WTC11 (cell line): ENCODE measurements at regions of chr11 and their contacts with region 1.

Region 1: DNA sequence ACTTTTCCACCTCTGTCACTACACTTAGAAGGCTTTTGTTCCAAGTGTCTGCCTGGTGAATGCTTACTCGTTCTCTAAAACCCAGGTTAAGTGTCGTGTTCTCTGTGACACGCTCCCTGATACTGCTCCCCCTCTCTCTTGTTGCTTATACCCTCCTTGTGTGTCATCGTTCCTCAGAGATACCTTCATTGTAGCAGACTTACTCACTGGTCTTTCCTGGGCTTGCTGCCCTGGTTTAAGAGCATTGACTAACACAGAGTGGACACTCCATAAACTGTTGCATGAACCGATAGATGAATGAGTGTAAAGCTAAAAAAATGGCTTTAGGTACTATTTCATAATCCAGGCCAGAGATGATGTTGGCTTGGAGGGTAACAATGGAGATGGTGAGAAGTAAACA is 171.3 kb downstream of the GRIK4 start:
- DNase-seq: no peak
- ATAC-seq: no peak
- H3K4me3 Mint-ChIP-seq: no peak overlapping the region
- H3K27ac Mint-ChIP-seq: no peak overlapping the region
- H3K4me1 Mint-ChIP-seq: peaks cover 22% of the 10 kb centered on the region
- H3K27me3 Mint-ChIP-seq: no peaks in the 10 kb centered on the region
- CTCF ChIP-seq: no peak

Region 2: DNA sequence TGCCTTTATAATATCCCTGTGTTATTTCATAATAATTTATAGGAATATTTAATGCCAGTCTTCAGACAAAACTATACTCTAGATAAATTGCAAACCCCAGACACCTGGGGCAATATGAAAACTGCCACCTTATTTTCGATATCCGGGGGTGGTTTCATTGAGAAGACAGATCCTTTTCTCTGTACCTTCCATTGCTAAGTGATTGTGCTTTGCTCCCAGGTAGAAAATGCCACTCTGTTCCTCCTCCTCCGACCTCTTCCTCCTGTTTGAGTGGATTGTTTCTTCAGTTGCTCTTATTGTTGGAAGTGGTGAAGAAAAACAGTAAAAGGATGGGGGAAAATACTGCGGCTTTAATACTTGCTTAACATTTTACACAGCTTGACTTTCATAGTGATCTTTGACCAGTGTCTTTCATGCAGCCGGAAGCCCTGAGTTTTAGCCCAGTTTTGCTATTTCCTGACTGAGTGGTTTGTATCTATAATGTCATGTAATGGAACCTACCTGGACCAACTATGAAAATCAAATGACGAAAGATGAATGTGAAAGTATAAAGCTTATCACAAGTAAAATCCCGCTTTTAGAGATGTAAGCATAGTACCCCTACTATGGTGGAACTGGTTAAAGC is 177.0 kb before region 1 on chr11:
- CTCF ChIA-PET with region 1: interaction called, 19 read pairs
- POLR2A ChIA-PET with region 1: no interaction called
- DNase-seq: no peak
- ATAC-seq: no peak
- H3K4me3 Mint-ChIP-seq: no peak overlapping the region
- H3K27ac Mint-ChIP-seq: no peak overlapping the region
- H3K4me1 Mint-ChIP-seq: peaks cover 41% of the 10 kb centered on the region
- H3K27me3 Mint-ChIP-seq: peaks cover 9% of the 10 kb centered on the region
- CTCF ChIP-seq: no peak

Region 3: DNA sequence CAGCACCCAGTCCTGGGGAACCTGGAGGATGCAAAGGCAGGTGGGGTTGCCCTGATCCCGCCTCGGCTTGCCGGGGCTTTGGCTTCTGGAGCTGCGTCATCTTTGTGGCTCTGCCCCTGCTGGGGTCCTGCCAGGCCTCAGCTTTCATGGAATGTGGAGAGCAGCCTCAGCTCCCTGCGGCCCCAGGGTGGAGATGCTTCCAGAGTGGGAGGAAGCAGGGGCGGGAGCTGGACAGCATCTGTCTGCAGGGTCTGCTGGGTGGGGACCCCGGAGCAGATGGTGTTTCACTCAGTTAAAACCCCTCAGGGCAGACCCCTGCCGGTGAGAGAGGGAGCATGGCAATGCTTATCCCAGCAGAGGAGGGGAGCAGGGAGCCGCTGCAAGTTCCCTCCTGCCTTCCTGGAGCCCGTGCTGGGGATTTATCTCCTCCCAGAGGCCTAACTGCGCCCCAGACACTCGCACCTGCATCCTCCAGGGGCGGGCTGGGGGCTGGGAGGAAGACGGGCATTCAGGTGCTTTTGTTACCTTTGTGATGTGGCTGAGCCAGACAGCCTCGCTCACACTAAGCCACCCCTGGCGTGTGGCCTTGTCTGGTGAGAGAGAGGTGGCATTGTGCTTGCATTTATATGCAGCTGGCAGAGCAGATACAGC is 155.6 kb before region 1 on chr11:
- CTCF ChIA-PET with region 1: interaction called, 11 read pairs
- POLR2A ChIA-PET with region 1: no interaction called
- DNase-seq: peak; percentile 86
- ATAC-seq: peak; percentile 91
- H3K4me3 Mint-ChIP-seq: peak overlapping the region; percentile 25; the same call in 1 of the 2 replicates
- H3K27ac Mint-ChIP-seq: peak overlapping the region; percentile 89
- H3K4me1 Mint-ChIP-seq: peaks cover 48% of the 10 kb centered on the region
- H3K27me3 Mint-ChIP-seq: no peaks in the 10 kb centered on the region; the same call in 1 of the 2 replicates
- CTCF ChIP-seq: no peak

Region 4: DNA sequence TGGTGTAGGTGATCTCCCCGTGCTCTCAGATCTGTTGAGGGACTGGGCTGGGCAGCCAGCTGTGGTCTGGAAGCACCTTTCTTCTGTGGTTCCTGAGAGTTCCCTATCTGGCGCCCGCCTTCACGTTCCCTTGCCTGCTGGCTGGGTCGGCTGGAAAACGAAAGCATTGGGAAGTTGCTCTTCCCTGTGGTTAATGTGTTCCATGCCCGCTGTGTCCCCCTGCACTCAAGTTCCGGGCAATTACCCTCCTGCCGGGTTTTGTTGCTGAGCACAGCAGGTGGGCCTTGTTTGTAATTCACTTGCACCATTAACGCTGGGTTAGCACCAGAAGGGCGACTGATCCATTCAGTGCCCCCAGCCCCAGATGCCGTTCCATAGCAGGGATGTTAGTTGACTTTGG is 37.2 kb before region 1 on chr11:
- CTCF ChIA-PET with region 1: interaction called, 19 read pairs
- POLR2A ChIA-PET with region 1: no interaction called
- DNase-seq: peak; percentile 85
- ATAC-seq: peak; percentile 76
- H3K4me3 Mint-ChIP-seq: peak overlapping the region; percentile 48
- H3K27ac Mint-ChIP-seq: no peak overlapping the region
- H3K4me1 Mint-ChIP-seq: peaks cover 46% of the 10 kb centered on the region
- H3K27me3 Mint-ChIP-seq: peaks cover 98% of the 10 kb centered on the region
- CTCF ChIP-seq: no peak

Region 5: GRCh38 chr11:120696597-120697218 is 13.8 kb after region 1 on chr11:
- CTCF ChIA-PET with region 1: interaction called, 96 read pairs
- POLR2A ChIA-PET with region 1: no interaction called
- DNase-seq: peak; percentile 69
- ATAC-seq: peak; percentile 81
- H3K4me3 Mint-ChIP-seq: no peak overlapping the region
- H3K27ac Mint-ChIP-seq: no peak overlapping the region; the same call in 1 of the 2 replicates
- H3K4me1 Mint-ChIP-seq: peaks cover 5% of the 10 kb centered on the region
- H3K27me3 Mint-ChIP-seq: no peaks in the 10 kb centered on the region
- CTCF ChIP-seq: peak; percentile 33; the same call in 1 of the 2 replicates

Region 6: DNA sequence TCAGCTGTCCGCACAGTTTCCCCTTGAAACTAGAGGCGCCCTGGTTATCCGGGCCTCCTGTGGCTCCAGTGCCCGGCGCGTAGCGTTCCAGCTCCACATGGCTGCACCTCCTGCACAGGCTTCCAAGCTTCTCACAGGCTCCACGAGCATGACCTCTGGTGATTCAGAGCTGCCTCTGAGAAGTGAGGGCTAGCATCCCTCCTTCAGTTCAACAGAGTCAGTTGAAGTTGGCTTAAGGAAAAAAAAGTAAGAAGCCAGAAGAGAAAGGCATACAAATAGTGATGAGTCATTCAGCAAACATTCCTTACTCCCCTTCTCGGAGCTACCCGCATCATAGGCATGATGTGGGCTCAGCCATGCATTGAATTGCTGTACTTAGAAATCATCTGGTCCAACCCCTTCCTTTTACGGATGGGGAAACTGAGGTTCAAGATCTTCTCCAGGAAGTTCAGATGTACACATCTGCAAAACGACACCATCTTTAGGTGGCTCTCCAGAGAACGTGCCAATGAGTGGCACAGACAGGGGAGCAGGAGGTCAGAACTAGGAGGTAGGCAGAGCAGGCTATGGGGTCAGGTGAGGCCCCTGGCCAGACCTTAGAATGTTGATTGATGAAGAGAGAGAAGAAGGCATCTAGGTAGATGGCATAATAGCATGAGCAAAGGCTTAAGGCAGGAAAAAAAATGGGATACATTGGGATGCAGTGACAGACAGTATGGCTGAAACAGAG is 124.7 kb after region 1 on chr11:
- CTCF ChIA-PET with region 1: interaction called, 14 read pairs
- POLR2A ChIA-PET with region 1: no interaction called
- DNase-seq: no peak
- ATAC-seq: peak; percentile 67
- H3K4me3 Mint-ChIP-seq: no peak overlapping the region
- H3K27ac Mint-ChIP-seq: no peak overlapping the region
- H3K4me1 Mint-ChIP-seq: peaks cover 26% of the 10 kb centered on the region
- H3K27me3 Mint-ChIP-seq: no peaks in the 10 kb centered on the region
- CTCF ChIP-seq: no peak